ENCODE measurements at regions of chr20 and their contacts with region 1.

Region 1: GRCh38 chr20:50301712-50302111 is 111.1 kb downstream of the CEBPB start:
- DNase-seq: no peak
- H3K4me3 ChIP-seq: no peak overlapping the region
- H3K27ac ChIP-seq: no peak overlapping the region
- H3K4me1 ChIP-seq: peaks cover 30% of the 10 kb centered on the region
- H3K27me3 ChIP-seq: no peaks in the 10 kb centered on the region
- CTCF ChIP-seq: no peak

Region 2: DNA sequence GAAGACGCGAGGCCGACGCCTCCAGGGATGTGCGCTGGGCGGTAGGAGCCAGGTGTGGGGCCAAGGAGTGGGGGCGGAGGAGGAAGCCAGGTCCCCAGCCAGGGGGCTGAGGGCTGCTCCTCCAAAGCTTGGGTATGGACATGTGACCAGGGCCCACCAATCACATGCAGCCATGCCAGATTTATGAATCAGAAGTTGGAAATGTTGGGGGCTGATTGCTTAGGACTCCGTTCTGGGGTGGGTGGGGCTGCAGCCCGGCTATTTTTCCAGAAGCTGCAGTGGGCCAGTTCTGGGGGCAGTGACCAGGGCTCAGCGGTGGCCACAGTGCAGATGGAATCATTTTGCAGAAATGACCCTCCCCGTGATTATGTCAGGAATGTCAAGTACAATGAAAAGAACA is 15.1 kb before region 1 on chr20:
- CTCF ChIA-PET with region 1: interaction called, 4 read pairs
- dilution Hi-C with region 1: no loop called
- in situ Hi-C with region 1: no loop called
- intact Hi-C with region 1: loop called (anchors 2 kb)
- DNase-seq: peak; percentile 37
- H3K4me3 ChIP-seq: no peak overlapping the region
- H3K27ac ChIP-seq: no peak overlapping the region
- H3K4me1 ChIP-seq: peaks cover 24% of the 10 kb centered on the region
- H3K27me3 ChIP-seq: no peaks in the 10 kb centered on the region
- CTCF ChIP-seq: no peak